IMR-90 (cell line): ENCODE measurements at regions of chr15 and their contacts with region 1.

Region 1: GRCh38 chr15:94370206-94370935 is 139.0 kb downstream of the MCTP2 start:
- DNase-seq: no peak
- ATAC-seq: no peak
- H3K4me3 ChIP-seq: no peak overlapping the region
- H3K27ac ChIP-seq: no peak overlapping the region
- H3K4me1 ChIP-seq: no peaks in the 10 kb centered on the region
- H3K27me3 ChIP-seq: no peaks in the 10 kb centered on the region
- CTCF ChIP-seq: no peak
- POLR2A ChIP-seq: no peak
- RAD21 ChIP-seq: no peak

Region 2: DNA sequence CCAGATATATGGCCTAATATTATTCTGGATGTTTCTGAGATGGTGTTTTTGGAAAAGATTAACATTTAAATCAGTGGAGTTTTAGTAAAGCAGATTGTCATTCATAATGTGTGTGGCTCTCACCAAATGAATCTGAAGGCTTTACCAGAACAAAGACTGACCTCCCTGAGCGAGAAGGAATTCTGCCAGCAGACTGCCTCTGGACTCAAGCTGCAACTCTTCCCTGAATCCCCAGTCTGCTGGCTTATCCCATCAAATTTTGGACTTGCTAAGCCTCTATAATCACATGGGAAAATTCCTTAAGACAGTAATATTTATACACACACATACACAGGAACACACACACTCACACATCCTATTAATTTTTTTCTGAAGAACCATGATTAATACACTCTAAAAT is 1817.1 kb before region 1 on chr15:
- CTCF ChIA-PET with region 1: no interaction called
- POLR2A ChIA-PET with region 1: no interaction called
- dilution Hi-C with region 1: no loop called
- in situ Hi-C with region 1: no loop called
- intact Hi-C with region 1: loop called (anchors 5 kb)
- DNase-seq: no peak
- ATAC-seq: no peak
- H3K4me3 ChIP-seq: no peak overlapping the region
- H3K27ac ChIP-seq: no peak overlapping the region
- H3K4me1 ChIP-seq: no peaks in the 10 kb centered on the region
- H3K27me3 ChIP-seq: no peaks in the 10 kb centered on the region
- CTCF ChIP-seq: no peak
- POLR2A ChIP-seq: no peak
- RAD21 ChIP-seq: no peak

Region 3: DNA sequence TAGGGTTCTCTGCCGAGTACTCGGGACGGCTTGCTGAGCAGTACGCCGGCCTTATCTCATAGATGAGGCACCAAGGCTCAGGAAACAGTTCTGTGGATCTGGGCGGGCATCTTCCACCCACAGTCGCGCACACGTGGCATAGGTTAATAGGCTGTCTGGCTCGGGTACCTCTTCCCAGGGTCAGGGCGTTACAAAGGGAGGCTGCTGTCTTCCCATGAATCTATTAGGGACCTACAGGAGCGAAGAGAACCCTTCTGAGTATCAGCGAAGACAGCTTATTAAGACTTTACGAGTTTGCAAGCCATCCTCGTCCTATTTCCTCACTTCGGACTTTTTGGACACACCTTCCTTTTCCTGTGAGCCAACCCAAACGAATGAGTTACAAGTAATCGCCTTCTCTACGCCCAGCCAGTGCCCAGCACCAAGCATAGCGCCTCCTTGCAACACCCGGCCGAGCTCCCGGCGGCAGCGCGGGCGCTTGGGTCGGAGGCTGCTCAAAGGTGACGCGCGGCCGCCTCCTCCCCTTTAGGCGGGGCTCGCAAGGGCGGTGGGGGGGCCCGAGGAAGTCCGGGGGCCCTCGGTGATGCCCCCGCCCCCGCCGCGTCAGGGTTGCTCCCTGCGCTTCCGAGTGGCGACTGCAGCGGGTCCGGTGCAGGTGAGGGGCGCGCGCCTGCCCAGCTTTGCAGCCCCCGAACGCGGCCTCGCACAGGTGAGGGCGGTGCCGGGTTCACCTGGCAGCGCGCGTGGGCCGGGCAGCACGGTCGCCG is 139.2 kb before region 1 on chr15 and contains the start of gene MCTP2:
- CTCF ChIA-PET with region 1: no interaction called
- POLR2A ChIA-PET with region 1: interaction called, 17 read pairs
- dilution Hi-C with region 1: no loop called
- in situ Hi-C with region 1: no loop called
- intact Hi-C with region 1: no loop called
- DNase-seq: peak; percentile 70
- ATAC-seq: peak; percentile 94
- H3K4me3 ChIP-seq: peak within 1 kb of the TSS; percentile 85
- H3K27ac ChIP-seq: peak within 1 kb of the TSS; percentile 38
- H3K4me1 ChIP-seq: peaks cover 3% of the 10 kb centered on the region
- H3K27me3 ChIP-seq: no peaks in the 10 kb centered on the region
- CTCF ChIP-seq: 0 out of 2 replicates have a peak, but pooled peaks have one; percentile 7
- POLR2A ChIP-seq: 0 out of 2 replicates have a peak, but pooled peaks have one; percentile 50
- RAD21 ChIP-seq: no peak
- total RNA-seq, gene MCTP2: 8.6 and 9.9 TPM in 2 replicates

Region 4: GRCh38 chr15:94258246-94258645 is 112.1 kb before region 1 on chr15:
- CTCF ChIA-PET with region 1: no interaction called
- POLR2A ChIA-PET with region 1: no interaction called
- dilution Hi-C with region 1: no loop called
- in situ Hi-C with region 1: no loop called
- intact Hi-C with region 1: no loop called
- DNase-seq: no peak
- ATAC-seq: no peak
- H3K4me3 ChIP-seq: no peak overlapping the region
- H3K27ac ChIP-seq: no peak overlapping the region
- H3K4me1 ChIP-seq: peaks cover 7% of the 10 kb centered on the region
- H3K27me3 ChIP-seq: no peaks in the 10 kb centered on the region
- CTCF ChIP-seq: no peak
- POLR2A ChIP-seq: no peak
- RAD21 ChIP-seq: no peak

Region 5: GRCh38 chr15:94582369-94582768 is 212.0 kb after region 1 on chr15:
- CTCF ChIA-PET with region 1: no interaction called
- POLR2A ChIA-PET with region 1: no interaction called
- dilution Hi-C with region 1: no loop called
- in situ Hi-C with region 1: no loop called
- intact Hi-C with region 1: no loop called
- DNase-seq: no peak
- ATAC-seq: no peak
- H3K4me3 ChIP-seq: no peak overlapping the region
- H3K27ac ChIP-seq: no peak overlapping the region
- H3K4me1 ChIP-seq: no peaks in the 10 kb centered on the region
- H3K27me3 ChIP-seq: no peaks in the 10 kb centered on the region
- CTCF ChIP-seq: no peak
- POLR2A ChIP-seq: no peak
- RAD21 ChIP-seq: no peak